ENCODE measurements at regions of chr5 and their contacts with region 1.

Region 1: DNA sequence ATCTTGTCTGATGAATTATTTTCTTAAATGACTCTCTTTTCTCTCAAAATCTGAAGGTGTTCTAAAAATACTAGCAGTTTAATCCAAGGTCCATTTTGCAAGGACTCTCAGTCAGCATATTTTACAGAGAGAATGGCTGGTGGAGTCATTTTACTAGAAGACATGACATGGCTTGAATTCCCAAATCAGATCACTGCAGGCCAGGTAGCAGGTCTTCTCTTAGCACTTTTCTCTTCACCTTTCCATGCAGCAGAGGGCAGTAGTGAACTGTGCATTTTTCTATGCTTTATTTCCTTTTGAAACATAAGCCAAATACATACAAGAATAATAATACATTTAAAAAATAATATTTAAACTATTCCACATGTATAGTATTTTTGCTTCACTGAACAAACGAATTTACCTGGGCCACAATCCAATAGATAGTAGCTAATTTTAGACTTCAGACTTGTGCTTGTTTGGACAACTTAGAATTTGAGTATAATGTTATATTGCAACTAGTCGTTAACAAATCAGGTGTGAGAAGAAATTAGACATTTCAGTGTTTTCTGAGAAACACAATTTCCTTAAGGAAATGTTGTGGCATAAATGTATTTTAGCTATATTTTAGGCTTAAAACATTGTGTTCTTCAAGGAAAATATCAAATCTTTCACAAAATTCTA is 289.4 kb upstream of the DAB2 start:
- DNase-seq: peak; percentile 70
- H3K4me3 ChIP-seq: no peak overlapping the region
- H3K27ac ChIP-seq: no peak overlapping the region
- H3K4me1 ChIP-seq: no peaks in the 10 kb centered on the region
- H3K27me3 ChIP-seq: no peaks in the 10 kb centered on the region
- CTCF ChIP-seq: peak; percentile 72

Region 2: GRCh38 chr5:40679914-40680681 is 965.9 kb after region 1 on chr5 and contains the start of gene PTGER4:
- intact Hi-C with region 1: loop called (anchors 5 kb)
- DNase-seq: peak; percentile 53
- H3K4me3 ChIP-seq: peak within 1 kb of the TSS; percentile 63
- H3K27ac ChIP-seq: peak within 1 kb of the TSS; percentile 95
- H3K4me1 ChIP-seq: no peaks in the 10 kb centered on the region
- H3K27me3 ChIP-seq: no peaks in the 10 kb centered on the region
- CTCF ChIP-seq: no peak
- total RNA-seq, gene PTGER4: 28.1 to 53.4 TPM

Region 3: GRCh38 chr5:40736103-40736875 is 1022.1 kb after region 1 on chr5:
- intact Hi-C with region 1: loop called (anchors 10 kb)
- DNase-seq: no peak
- H3K4me3 ChIP-seq: no peak overlapping the region
- H3K27ac ChIP-seq: no peak overlapping the region
- H3K4me1 ChIP-seq: peaks cover 11% of the 10 kb centered on the region
- H3K27me3 ChIP-seq: no peaks in the 10 kb centered on the region
- CTCF ChIP-seq: peak; percentile 70

Measured in colonic mucosa (tissue), 4 donors.